Activated CD4-positive, alpha-beta memory T cell treated with anti-CD3 and anti-CD28 coated beads for 36 hours (primary cell): ENCODE measurements at regions of chr18 and their contacts with region 1.

Region 1: DNA sequence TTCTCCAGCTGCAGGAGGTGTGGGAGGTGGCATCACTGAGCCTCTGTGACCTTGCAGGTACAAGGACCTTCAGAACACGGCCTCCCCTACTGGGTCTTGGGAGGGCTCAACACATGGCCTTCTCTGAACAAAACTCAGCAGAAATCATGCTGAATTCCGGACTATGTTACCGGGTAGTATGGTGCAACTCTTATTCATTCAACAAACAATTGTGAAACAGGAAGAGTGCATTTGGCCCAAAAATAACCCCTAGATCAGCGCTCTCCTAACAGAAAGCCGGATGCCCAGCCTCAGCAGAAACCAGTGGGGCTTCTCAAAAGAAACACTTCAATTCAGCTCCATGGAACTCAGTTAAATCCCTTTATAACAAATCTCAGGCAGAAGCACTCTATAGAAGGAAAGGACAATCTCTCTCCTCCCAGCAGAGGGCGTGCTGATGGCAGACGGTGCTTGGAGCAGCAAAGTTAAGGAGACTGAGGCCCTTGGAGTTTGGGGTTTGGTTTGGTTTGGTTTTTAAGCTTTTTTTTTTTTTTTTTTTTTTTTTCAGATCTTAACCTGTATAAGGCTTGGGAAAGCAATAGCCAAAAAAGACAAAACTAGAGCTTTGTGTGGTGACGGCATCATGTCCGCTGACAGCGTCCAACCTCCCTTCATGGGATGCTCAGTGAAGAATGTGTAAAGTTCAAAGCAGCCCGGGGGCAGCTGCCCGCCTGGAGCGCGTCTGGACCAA is 104.2 kb upstream of the SALL3 start:
- DNase-seq: peak; percentile 43
- H3K4me3 Mint-ChIP-seq: no peak overlapping the region
- H3K27ac Mint-ChIP-seq: no peak overlapping the region
- H3K4me1 Mint-ChIP-seq: no peaks in the 10 kb centered on the region
- H3K27me3 Mint-ChIP-seq: peaks cover 20% of the 10 kb centered on the region

Region 2: GRCh38 chr18:78805840-78806239 is 69.6 kb before region 1 on chr18:
- CTCF ChIA-PET with region 1: no interaction called
- POLR2A ChIA-PET with region 1: no interaction called
- intact Hi-C with region 1: no loop called
- DNase-seq: no peak
- H3K4me3 Mint-ChIP-seq: no peak overlapping the region
- H3K27ac Mint-ChIP-seq: no peak overlapping the region
- H3K4me1 Mint-ChIP-seq: no peaks in the 10 kb centered on the region
- H3K27me3 Mint-ChIP-seq: peaks cover 2% of the 10 kb centered on the region

Region 3: DNA sequence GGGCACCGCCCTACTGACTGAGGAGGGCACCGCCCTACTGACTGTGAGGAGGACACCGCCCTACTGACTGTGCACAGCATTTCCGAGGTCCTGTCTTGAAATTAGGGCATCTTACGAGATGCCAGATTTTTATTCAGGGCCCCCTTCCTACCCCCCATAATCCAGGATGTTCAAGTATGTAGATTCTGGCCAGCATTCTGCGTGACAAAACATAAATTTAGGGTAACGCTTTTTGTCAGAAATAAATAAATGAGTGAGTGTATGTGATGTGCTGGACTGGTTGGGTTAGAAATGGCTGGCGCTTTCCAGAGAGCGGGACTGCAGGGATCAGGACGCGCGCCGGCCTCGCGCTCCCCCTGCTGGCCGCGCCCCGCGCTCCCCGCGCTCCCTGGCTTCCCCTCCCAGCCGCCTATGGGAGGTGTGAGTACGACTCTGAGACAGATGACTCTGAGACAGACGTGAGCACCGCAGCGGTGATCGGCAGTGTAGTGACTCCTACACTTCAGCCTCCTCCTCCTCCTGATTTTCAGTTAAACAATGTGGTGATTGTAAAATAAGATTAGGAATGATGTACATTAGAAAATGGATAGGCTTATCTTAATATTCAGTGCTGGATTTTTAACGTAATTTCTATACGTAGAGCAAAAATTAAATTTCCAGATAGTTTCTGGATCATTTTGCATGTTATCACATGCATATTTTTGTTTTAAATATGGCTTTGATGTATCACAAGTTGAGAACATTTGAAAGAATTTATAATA is 371.1 kb after region 1 on chr18:
- CTCF ChIA-PET with region 1: no interaction called
- POLR2A ChIA-PET with region 1: no interaction called
- intact Hi-C with region 1: loop called (anchors 1 kb)
- DNase-seq: peak; percentile 89
- H3K4me3 Mint-ChIP-seq: peak overlapping the region; percentile 65
- H3K27ac Mint-ChIP-seq: peak overlapping the region; percentile 60
- H3K4me1 Mint-ChIP-seq: peaks cover 12% of the 10 kb centered on the region
- H3K27me3 Mint-ChIP-seq: no peaks in the 10 kb centered on the region